ENCODE measurements at regions of chr4 and their contacts with region 1.

Region 1: GRCh38 chr4:186845137-186845842 is 121.6 kb upstream of the FAT1 start:
- DNase-seq: peak; percentile 69 to 90 (median 78)
- ATAC-seq: peak; percentile 87
- H3K4me3 ChIP-seq: no peak overlapping the region
- H3K27ac ChIP-seq: peak overlapping the region; percentile 92
- H3K4me1 ChIP-seq: peaks cover 12 to 31% of the 10 kb centered on the region in 2 experiments
- H3K27me3 ChIP-seq: no peaks in the 10 kb centered on the region
- CTCF ChIP-seq: no peak; a peak in 1 of 6 replicates
- EP300 ChIP-seq: peak; percentile 67
- POLR2A ChIP-seq: peak; percentile 77
- RAD21 ChIP-seq: peak; percentile 21 to 23; a peak in 2 of 4 replicates

Region 2: GRCh38 chr4:186743261-186743660 is 102.0 kb before region 1 on chr4:
- CTCF ChIA-PET with region 1: no interaction called
- POLR2A ChIA-PET with region 1: no interaction called
- in situ Hi-C with region 1: no loop called
- intact Hi-C with region 1: no loop called
- DNase-seq: no peak
- ATAC-seq: no peak
- H3K4me3 ChIP-seq: no peak overlapping the region
- H3K27ac ChIP-seq: no peak overlapping the region
- H3K4me1 ChIP-seq: peaks cover 0 to 10% of the 10 kb centered on the region in 2 experiments; a peak in 3 of 5 replicates
- H3K27me3 ChIP-seq: peaks cover 0 to 9% of the 10 kb centered on the region in 2 experiments; a peak in 2 of 5 replicates
- CTCF ChIP-seq: no peak
- EP300 ChIP-seq: no peak
- POLR2A ChIP-seq: no peak
- RAD21 ChIP-seq: no peak

Region 3: GRCh38 chr4:186765138-186765537 is 80.2 kb before region 1 on chr4:
- CTCF ChIA-PET with region 1: no interaction called
- POLR2A ChIA-PET with region 1: no interaction called
- in situ Hi-C with region 1: no loop called
- intact Hi-C with region 1: loop called (anchors 2 kb)
- DNase-seq: peak; percentile 55 to 77 (median 60)
- ATAC-seq: peak; percentile 97
- H3K4me3 ChIP-seq: no peak overlapping the region
- H3K27ac ChIP-seq: peak overlapping the region; percentile 38
- H3K4me1 ChIP-seq: peaks cover 3 to 10% of the 10 kb centered on the region in 2 experiments; a peak in 3 of 5 replicates
- H3K27me3 ChIP-seq: no peaks in the 10 kb centered on the region
- CTCF ChIP-seq: no peak
- EP300 ChIP-seq: peak; percentile 12; the same call in 1 of the 2 replicates
- POLR2A ChIP-seq: no peak
- RAD21 ChIP-seq: no peak

Region 4: GRCh38 chr4:186829740-186830449 is 15.4 kb before region 1 on chr4:
- CTCF ChIA-PET with region 1: no interaction called
- POLR2A ChIA-PET with region 1: interaction called, 10 read pairs
- in situ Hi-C with region 1: no loop called
- intact Hi-C with region 1: no loop called
- DNase-seq: peak; percentile 44 to 69 (median 48)
- ATAC-seq: peak; percentile 68
- H3K4me3 ChIP-seq: no peak overlapping the region
- H3K27ac ChIP-seq: peak overlapping the region; percentile 75
- H3K4me1 ChIP-seq: peaks cover 6 to 56% of the 10 kb centered on the region in 2 experiments; a peak in 4 of 5 replicates
- H3K27me3 ChIP-seq: no peaks in the 10 kb centered on the region
- CTCF ChIP-seq: no peak
- EP300 ChIP-seq: peak; percentile 65; the same call in 1 of the 2 replicates
- POLR2A ChIP-seq: no peak
- RAD21 ChIP-seq: no peak

Region 5: DNA sequence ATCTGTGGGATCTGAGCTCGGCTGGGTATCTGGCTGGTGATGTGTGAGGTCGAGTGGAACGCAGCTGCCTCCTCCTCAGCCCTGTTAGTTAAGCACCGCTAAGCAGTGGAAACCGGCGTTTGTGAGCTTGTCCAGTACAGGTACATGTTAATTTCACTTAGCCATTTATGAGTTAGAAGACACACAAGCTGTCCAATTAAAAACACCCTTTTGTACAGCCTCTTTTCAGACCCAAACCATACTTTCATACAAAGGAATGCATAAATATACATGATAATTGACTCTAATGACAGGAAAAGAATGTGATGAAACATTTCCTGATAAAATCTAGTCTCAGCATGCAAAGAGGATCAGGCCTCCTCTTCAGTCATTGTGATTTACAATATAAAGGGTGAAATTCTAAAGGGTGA is 42.0 kb after region 1 on chr4:
- CTCF ChIA-PET with region 1: no interaction called
- POLR2A ChIA-PET with region 1: no interaction called
- in situ Hi-C with region 1: no loop called
- intact Hi-C with region 1: loop called (anchors 2 kb)
- DNase-seq: peak in 1 of 4 experiments; percentile 20
- ATAC-seq: peak; percentile 18; the same call in 1 of the 3 replicates
- H3K4me3 ChIP-seq: peak overlapping the region; percentile 64
- H3K27ac ChIP-seq: no peak overlapping the region
- H3K4me1 ChIP-seq: peaks cover 8 to 16% of the 10 kb centered on the region in 2 experiments; a peak in 3 of 5 replicates
- H3K27me3 ChIP-seq: no peaks in the 10 kb centered on the region
- CTCF ChIP-seq: no peak
- EP300 ChIP-seq: no peak
- POLR2A ChIP-seq: no peak
- RAD21 ChIP-seq: no peak

Region 6: DNA sequence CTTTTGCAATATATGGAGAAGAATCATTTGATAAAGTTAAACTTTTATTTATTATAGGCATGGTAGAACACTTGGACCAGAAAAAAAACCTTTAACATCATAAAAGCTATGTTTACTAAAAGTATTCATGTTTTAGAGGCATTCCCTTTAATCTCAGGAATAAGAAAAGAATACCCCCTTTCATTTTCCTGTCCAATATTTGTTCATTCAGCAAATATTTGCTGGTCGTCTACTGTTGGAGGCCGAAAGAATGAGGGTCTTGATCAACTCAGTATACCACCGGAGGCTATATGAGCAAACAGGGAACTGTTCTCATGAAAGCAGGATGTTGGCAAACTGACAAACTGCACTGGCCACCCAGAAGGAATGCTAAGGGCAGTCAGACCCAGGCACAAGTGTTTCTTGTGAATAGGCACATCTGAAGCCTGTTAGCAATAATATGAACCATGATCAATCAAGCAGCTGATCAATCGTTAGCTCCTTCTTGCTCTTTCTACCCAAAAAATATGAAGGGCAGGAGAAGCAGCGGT is 359.2 kb after region 1 on chr4:
- CTCF ChIA-PET with region 1: no interaction called
- POLR2A ChIA-PET with region 1: no interaction called
- in situ Hi-C with region 1: no loop called
- intact Hi-C with region 1: no loop called
- DNase-seq: no peak
- ATAC-seq: no peak
- H3K4me3 ChIP-seq: no peak overlapping the region
- H3K27ac ChIP-seq: no peak overlapping the region
- H3K4me1 ChIP-seq: no peaks in the 10 kb centered on the region
- H3K27me3 ChIP-seq: no peaks in the 10 kb centered on the region
- CTCF ChIP-seq: no peak
- EP300 ChIP-seq: no peak
- POLR2A ChIP-seq: no peak
- RAD21 ChIP-seq: no peak